Activated T-helper 2 cell treated with anti-CD3 and anti-CD28 coated beads, Interferon-gamma antibody, Interleukin-2, Interleukin-4, amounts not matched to agents 10 μg/mL and 5 μg/mL and 100 μg/mL, durations not matched to agents 14 hours and 24 hours and 36 hours (primary cell): ENCODE measurements at regions of chr15 and their contacts with region 1.

Region 1: DNA sequence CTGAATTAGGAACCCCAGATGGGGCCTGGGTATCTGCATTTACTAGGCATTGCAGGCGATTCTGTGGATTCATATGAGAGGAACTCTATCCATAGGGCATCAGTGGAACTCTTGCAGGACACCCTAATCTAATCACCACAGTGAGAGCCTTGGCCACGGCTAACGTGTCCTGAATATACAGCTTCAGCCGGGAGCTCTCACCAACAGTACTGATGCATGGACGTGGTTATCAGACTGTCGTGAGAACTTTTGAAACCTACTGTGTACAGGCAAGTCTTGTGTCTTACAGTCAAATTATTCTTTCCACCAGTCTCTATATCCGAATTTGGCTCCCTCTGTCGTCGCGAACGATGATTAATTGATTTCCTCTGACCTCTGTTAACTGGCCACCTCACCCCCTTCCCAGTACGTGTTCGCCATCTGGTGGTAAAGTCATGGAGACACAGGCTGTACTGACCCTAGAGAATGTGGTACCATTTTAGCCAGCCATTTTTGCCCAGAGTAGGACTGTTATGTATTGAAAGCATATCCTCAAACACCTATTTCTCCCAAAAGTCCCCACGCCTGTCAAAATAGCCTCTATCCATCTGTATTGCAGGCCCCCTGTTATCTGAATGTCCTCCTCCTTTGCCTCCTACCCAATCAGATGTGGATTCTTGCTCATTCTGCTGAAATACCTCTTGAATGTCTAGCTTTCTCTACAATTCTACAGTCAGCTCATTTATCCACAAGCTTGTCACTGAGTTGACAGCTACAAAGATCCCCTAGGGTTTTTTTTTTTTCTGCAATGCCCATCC is 39.7 kb downstream of the GLDN start:
- DNase-seq: peak; percentile 25
- H3K4me3 Mint-ChIP-seq: no peak overlapping the region
- H3K27ac Mint-ChIP-seq: no peak overlapping the region
- H3K4me1 Mint-ChIP-seq: peaks cover 6% of the 10 kb centered on the region
- H3K27me3 Mint-ChIP-seq: peaks cover 8% of the 10 kb centered on the region

Region 2: DNA sequence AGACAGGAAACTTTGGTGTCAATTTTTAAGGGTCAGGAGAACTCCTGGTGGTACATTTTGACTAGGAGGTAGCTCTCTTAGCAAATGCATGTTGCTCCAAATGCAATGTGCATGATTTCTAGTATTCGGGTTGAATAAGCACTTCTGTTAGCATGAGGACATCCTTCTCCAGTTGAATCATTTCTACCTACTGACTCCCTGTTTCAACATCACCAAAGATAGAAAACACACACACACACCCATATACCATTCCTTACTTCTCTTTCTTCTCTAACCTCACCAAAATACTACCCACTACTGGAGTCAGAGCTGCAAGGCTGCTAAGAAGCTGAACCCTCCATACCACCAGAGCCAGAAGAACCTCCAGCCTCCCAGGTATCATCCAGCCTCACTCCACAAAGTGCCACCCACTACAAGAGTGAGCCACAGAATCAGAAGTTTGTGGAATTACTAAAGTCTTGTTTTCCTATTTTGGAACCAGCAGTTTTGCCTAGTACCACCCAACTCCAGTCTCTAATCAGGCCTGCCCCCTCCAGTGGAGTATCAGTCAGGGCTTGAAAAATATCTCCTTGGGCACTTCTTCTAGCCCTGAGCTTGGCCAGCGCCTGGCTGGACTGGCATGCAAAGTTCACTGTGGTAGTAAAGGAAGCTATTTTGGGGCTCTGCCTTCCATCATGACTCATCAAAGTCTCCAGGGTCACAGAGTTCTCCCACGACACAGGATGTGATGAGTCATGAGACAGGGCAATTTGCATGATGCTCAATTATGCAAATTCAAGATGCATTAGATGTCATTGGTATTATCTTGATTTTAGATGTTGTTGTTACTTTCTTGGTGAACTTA is 153.0 kb before region 1 on chr15:
- intact Hi-C with region 1: loop called (anchors 5 kb)
- DNase-seq: peak; percentile 33
- H3K4me3 Mint-ChIP-seq: no peak overlapping the region
- H3K27ac Mint-ChIP-seq: peak overlapping the region; percentile 68
- H3K4me1 Mint-ChIP-seq: peaks cover 47% of the 10 kb centered on the region
- H3K27me3 Mint-ChIP-seq: no peaks in the 10 kb centered on the region

Region 3: DNA sequence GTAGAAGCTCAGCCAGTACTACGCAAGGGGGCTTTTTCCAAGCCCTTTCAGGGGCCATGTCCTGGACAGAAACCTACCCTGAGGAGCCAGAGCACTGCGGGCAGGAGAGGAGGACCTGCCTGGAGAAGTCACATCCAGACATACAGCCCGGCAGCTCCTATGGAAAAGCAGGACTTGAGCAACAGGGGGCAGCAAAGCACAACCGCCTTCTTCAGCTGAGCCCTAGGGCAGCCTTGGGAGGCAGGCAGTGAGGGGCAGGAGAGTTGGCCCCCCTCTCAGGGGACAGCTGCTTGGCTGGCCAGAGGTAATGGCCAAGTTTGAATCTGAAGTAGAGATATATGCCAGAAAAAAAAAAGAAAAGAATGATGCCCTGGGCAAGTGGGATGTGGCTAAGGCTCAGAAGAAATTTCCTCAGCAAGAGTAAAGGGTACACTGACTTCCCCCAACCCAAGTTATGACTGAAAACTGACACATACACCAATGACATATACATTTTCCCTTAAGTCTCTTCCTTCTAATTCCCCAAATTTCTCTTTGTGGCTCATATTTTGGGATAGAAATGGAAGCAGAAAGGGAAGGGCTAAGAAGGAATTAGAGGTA is 99.7 kb before region 1 on chr15:
- intact Hi-C with region 1: loop called (anchors 2 kb)
- DNase-seq: no peak
- H3K4me3 Mint-ChIP-seq: no peak overlapping the region
- H3K27ac Mint-ChIP-seq: peak overlapping the region; percentile 14
- H3K4me1 Mint-ChIP-seq: peaks cover 19% of the 10 kb centered on the region
- H3K27me3 Mint-ChIP-seq: peaks cover 19% of the 10 kb centered on the region